GM23248 (cell line): ENCODE measurements at regions of chr6 and their contacts with region 1.

Region 1: DNA sequence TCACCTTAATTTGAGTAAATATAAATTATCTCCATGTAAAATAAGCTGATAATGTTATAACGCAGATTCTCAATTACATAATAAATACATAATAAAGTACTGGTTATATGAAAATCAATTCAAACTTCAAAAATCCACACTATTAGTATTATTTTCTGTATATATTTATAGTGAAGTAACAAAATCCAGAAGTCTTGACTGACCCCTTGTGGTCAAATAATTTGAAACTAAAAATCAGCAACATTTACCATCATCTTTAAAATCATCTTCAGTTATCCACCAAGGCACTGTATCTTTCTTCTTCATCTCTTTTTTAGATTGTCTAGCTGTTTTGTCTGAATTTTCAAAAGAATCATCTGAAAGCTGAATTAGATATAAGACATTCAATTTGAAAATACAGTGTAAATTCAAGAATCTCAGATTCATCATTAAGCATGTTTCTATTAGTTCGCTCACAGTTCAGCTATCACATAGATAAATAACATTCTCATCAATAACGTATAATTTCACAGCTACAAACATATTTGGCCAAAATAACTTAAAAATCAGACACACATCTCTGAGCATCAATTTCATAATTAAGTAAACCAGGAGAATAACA is 6.5 kb downstream of the CEP162 start:
- DNase-seq: peak; percentile 49
- H3K4me3 ChIP-seq: no peak overlapping the region
- H3K27ac ChIP-seq: no peak overlapping the region
- H3K4me1 ChIP-seq: peaks cover 9% of the 10 kb centered on the region
- H3K27me3 ChIP-seq: no peaks in the 10 kb centered on the region

Region 2: DNA sequence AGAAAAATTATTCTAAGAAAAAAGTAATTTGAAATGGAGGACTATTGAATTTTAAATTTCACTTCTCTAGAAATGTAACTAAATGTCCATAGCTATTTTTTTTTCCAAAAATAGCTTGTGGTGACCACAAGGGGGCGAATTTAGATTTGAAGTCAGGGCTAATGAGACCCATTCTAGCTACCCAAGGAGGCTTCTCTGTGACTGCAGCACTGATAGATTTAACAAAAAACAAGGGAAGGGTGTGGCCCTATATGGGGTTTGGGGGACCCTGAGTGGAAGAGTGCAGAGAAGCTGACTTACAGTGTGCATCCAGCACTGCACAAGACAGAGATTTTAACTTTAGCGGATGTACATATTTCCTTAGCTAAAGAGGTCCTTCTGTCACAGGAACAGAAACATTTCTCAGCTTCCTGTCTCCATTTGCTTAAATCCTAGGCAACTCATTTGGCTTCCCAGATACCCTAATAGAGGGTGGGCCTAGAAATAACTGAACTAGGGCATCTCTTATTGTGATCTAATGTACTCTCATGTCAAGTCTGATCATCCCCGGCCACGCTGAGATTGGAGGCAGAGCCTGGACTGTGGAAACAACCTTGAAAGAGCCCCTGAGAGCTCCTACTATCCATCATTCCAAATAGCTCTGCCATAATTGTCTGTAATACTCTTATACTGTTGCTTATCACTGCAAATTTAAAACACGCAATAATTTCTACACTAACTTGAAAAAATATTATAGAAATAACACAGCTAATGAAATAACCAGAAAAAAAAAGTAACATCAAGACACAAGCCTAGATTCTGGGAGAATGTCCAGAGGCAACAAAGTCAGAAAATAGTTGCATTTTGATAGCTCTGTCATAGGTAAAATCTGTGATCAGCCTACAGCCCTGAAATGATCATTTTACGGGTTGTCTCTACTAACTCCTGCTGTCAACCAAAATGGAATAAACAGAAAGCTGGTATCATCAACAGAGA is 605.6 kb before region 1 on chr6:
- in situ Hi-C with region 1: loop called (anchors 25 kb)
- DNase-seq: peak; percentile 65
- H3K4me3 ChIP-seq: no peak overlapping the region
- H3K27ac ChIP-seq: no peak overlapping the region
- H3K4me1 ChIP-seq: no peaks in the 10 kb centered on the region
- H3K27me3 ChIP-seq: no peaks in the 10 kb centered on the region